ENCODE measurements at regions of chr5 and their contacts with region 1.

Region 1: GRCh38 chr5:136062366-136063274 is 33.8 kb downstream of the TGFBI start:
- DNase-seq: peak; percentile 69
- ATAC-seq: peak; percentile 14
- H3K4me3 ChIP-seq: no peak overlapping the region
- H3K27ac ChIP-seq: peak overlapping the region; percentile 28
- H3K4me1 ChIP-seq: peaks cover 58% of the 10 kb centered on the region
- H3K27me3 ChIP-seq: no peaks in the 10 kb centered on the region
- CTCF ChIP-seq: peak; percentile 70
- EP300 ChIP-seq: no peak
- POLR2A ChIP-seq: no peak
- RAD21 ChIP-seq: peak; percentile 83

Region 2: DNA sequence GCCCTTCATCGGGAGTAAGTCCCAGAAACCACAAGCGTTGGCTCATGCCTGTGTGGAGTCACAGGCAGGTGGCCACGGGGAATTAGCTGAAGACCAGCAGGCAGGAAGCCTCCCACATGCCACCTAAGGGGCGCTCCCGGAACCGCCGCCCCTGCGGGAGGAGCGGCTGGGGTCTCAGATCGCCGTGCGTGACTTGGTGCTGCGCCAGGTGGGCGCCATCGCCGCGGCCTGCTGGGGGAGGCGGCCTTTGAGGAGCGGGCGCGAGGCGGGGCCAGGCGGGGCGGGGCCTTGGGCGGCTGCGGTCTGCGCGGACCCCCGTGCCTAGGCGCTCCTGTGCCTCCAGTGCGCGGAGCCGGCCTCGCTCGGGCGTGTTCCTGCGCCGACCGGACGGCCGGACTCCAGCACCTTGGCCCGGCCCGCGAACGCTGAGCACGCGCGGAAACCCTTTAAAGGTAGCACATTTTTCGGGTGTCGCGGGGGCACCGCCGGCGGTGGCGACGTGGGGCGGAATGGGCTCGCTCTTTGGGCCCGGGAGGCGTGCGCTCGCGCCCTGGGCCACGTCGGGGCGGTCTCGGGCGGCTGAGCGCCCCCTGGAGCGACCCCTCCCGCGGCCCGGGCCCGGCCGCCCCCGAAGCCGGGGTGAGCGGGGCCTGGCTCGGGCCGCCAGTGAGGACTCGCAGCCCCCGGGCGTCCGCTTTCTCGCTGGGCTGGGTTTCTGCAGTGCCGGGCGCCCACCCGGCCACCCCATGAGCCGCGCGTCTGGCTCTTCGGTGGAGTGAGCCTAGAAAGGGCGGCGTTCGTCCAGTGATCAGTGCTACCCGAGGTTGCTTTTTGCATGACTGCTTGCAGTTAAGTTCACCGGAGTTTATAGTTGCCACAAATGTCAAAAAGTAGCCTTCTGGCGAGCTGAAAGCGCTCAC is 132.3 kb before region 1 on chr5:
- CTCF ChIA-PET with region 1: no interaction called
- POLR2A ChIA-PET with region 1: no interaction called
- in situ Hi-C with region 1: no loop called
- intact Hi-C with region 1: loop called (anchors 1 kb)
- DNase-seq: peak; percentile 68
- ATAC-seq: peak; percentile 91
- H3K4me3 ChIP-seq: peak overlapping the region; percentile 70 to 92 (median 81)
- H3K27ac ChIP-seq: peak overlapping the region; percentile 62
- H3K4me1 ChIP-seq: peaks cover 16% of the 10 kb centered on the region
- H3K27me3 ChIP-seq: peaks cover 0 to 4% of the 10 kb centered on the region in 2 experiments; a peak in 3 of 5 replicates
- CTCF ChIP-seq: peak; percentile 45
- EP300 ChIP-seq: no peak
- POLR2A ChIP-seq: peak; percentile 53 to 77
- RAD21 ChIP-seq: peak; percentile 18; the same call in 1 of the 2 replicates

Region 3: GRCh38 chr5:135944967-135945560 is 117.6 kb before region 1 on chr5:
- CTCF ChIA-PET with region 1: interaction called, 23 read pairs
- POLR2A ChIA-PET with region 1: no interaction called
- in situ Hi-C with region 1: loop called (anchors 5 kb)
- intact Hi-C with region 1: loop called (anchors 1 kb)
- DNase-seq: peak; percentile 86
- ATAC-seq: peak; percentile 57
- H3K4me3 ChIP-seq: no peak overlapping the region
- H3K27ac ChIP-seq: no peak overlapping the region
- H3K4me1 ChIP-seq: peaks cover 13% of the 10 kb centered on the region
- H3K27me3 ChIP-seq: no peaks in the 10 kb centered on the region
- CTCF ChIP-seq: peak; percentile 89
- EP300 ChIP-seq: 0 out of 4 replicates have a peak, but pooled peaks of 1 of the 2 experiments have one; percentile 8
- POLR2A ChIP-seq: no peak
- RAD21 ChIP-seq: peak; percentile 86

Region 4: GRCh38 chr5:135973323-135974020 is 89.1 kb before region 1 on chr5:
- CTCF ChIA-PET with region 1: interaction called, 5 read pairs
- POLR2A ChIA-PET with region 1: interaction called, 26 read pairs
- in situ Hi-C with region 1: no loop called
- intact Hi-C with region 1: loop called (anchors 1 kb)
- DNase-seq: peak; percentile 99
- ATAC-seq: peak; percentile 97
- H3K4me3 ChIP-seq: peak overlapping the region; percentile 7 to 49 (median 20); a peak in 5 of 6 replicates
- H3K27ac ChIP-seq: peak overlapping the region; percentile 98
- H3K4me1 ChIP-seq: peaks cover 55% of the 10 kb centered on the region
- H3K27me3 ChIP-seq: no peaks in the 10 kb centered on the region
- CTCF ChIP-seq: peak; percentile 32; the same call in 1 of the 2 replicates
- EP300 ChIP-seq: peak; percentile 96 to 99
- POLR2A ChIP-seq: peak; percentile 33 to 47; a peak in 2 of 4 replicates
- RAD21 ChIP-seq: peak; percentile 29; the same call in 1 of the 2 replicates

Region 5: GRCh38 chr5:135986891-135987401 is 75.7 kb before region 1 on chr5:
- CTCF ChIA-PET with region 1: no interaction called
- POLR2A ChIA-PET with region 1: interaction called, 4 read pairs
- in situ Hi-C with region 1: no loop called
- intact Hi-C with region 1: loop called (anchors 2 kb)
- DNase-seq: no peak
- ATAC-seq: no peak
- H3K4me3 ChIP-seq: no peak overlapping the region
- H3K27ac ChIP-seq: no peak overlapping the region
- H3K4me1 ChIP-seq: peaks cover 10% of the 10 kb centered on the region
- H3K27me3 ChIP-seq: no peaks in the 10 kb centered on the region
- CTCF ChIP-seq: no peak
- EP300 ChIP-seq: no peak
- POLR2A ChIP-seq: no peak
- RAD21 ChIP-seq: no peak

Region 6: GRCh38 chr5:136028782-136029742 is 33.6 kb before region 1 on chr5 and contains the start of gene TGFBI:
- CTCF ChIA-PET with region 1: interaction called, 3 read pairs
- POLR2A ChIA-PET with region 1: interaction called, 13 read pairs
- in situ Hi-C with region 1: loop called (anchors 5 kb)
- intact Hi-C with region 1: loop called (anchors 1 kb)
- DNase-seq: peak; percentile 61
- ATAC-seq: peak; percentile 95
- H3K4me3 ChIP-seq: peak within 1 kb of the TSS; percentile 80 to 85 (median 84)
- H3K27ac ChIP-seq: peak within 1 kb of the TSS; percentile 61
- H3K4me1 ChIP-seq: peaks cover 56% of the 10 kb centered on the region
- H3K27me3 ChIP-seq: no peaks in the 10 kb centered on the region; a peak in 2 of 5 replicates
- CTCF ChIP-seq: peak; percentile 70
- EP300 ChIP-seq: no peak
- POLR2A ChIP-seq: peak; percentile 82 to 94
- RAD21 ChIP-seq: peak; percentile 75
- total RNA-seq, gene TGFBI: 138 and 275 TPM in 2 replicates

Region 7: GRCh38 chr5:136174021-136174659 is 111.5 kb after region 1 on chr5:
- CTCF ChIA-PET with region 1: interaction called, 3 read pairs
- POLR2A ChIA-PET with region 1: no interaction called
- in situ Hi-C with region 1: no loop called
- intact Hi-C with region 1: loop called (anchors 1 kb)
- DNase-seq: peak; percentile 67
- ATAC-seq: peak; percentile 90
- H3K4me3 ChIP-seq: no peak overlapping the region
- H3K27ac ChIP-seq: no peak overlapping the region
- H3K4me1 ChIP-seq: no peaks in the 10 kb centered on the region
- H3K27me3 ChIP-seq: no peaks in the 10 kb centered on the region
- CTCF ChIP-seq: peak; percentile 72
- EP300 ChIP-seq: no peak
- POLR2A ChIP-seq: no peak
- RAD21 ChIP-seq: peak; percentile 54

Region 8: DNA sequence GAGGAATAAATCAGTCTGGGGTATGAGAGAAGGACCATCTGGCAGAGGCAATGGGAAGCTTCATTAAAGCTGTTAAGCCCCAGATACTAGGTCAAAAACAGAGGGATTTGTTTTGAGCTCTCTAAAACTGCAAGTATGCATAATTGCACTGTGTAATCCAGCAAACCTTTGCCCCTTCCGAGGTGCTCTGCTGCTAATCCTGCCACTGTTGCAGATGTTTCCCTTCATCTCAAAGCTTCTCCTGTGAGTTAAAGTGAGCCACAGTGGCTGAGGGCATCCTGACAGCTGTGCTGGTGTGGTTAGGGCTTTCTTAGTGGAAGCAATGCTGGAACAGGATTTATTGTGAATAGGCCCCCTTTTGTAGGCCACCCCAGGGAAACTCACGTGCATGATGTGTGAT is 463.0 kb after region 1 on chr5:
- CTCF ChIA-PET with region 1: no interaction called
- POLR2A ChIA-PET with region 1: no interaction called
- in situ Hi-C with region 1: no loop called
- intact Hi-C with region 1: no loop called
- DNase-seq: no peak
- ATAC-seq: no peak
- H3K4me3 ChIP-seq: no peak overlapping the region
- H3K27ac ChIP-seq: no peak overlapping the region
- H3K4me1 ChIP-seq: no peaks in the 10 kb centered on the region
- H3K27me3 ChIP-seq: no peaks in the 10 kb centered on the region
- CTCF ChIP-seq: no peak
- EP300 ChIP-seq: no peak
- POLR2A ChIP-seq: no peak
- RAD21 ChIP-seq: no peak

Measured in HepG2 (cell line).